Activated naive CD4-positive, alpha-beta T cell treated with anti-CD3 and anti-CD28 coated beads for 36 hours (primary cell): ENCODE measurements at regions of chr14 and their contacts with region 1.

Region 1: DNA sequence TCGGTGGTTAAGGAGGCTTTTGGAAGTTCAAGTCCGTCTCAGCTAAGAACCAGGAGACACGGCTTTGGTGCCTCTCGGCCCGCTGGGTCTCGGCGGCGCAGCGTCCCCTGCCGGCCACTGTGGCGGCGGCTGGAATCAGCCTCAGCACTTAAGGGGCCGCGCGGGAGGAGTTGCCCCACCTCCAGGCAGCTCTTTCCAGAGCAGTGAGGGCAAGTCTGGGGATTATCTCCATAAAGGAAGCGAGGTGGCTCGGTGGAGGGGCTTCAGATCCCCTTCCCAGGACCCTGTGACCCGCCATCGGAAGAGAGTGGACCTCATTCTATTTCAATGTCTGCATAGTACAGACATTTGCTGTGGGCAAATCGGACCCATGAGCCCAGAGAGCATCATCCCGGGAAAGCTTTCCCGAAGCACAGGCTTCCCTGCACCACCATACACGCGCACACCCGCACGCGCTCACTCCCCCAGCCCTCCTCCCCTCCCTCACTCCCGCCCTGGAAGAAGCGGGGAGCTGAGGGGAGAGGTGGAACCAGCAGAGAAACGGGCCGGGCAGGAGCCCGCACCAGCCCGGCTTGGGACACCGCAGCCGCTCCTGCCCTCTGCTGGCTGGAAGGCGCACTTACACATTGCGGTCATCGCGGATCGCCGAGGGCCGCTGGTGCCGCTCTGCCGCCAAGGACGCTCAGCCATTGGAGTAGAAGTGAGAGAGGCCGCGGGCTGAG is 15.9 kb downstream of the RNASE2 start:
- DNase-seq: peak; percentile 82
- H3K4me3 Mint-ChIP-seq: peak overlapping the region; percentile 83
- H3K27ac Mint-ChIP-seq: no peak overlapping the region
- H3K4me1 Mint-ChIP-seq: peaks cover 6% of the 10 kb centered on the region
- H3K27me3 Mint-ChIP-seq: peaks cover 17% of the 10 kb centered on the region

Region 2: GRCh38 chr14:20632682-20633428 is 338.3 kb before region 1 on chr14:
- CTCF ChIA-PET with region 1: interaction called, 3 read pairs
- intact Hi-C with region 1: loop called (anchors 5 kb)
- DNase-seq: peak; percentile 83
- H3K4me3 Mint-ChIP-seq: peak overlapping the region; percentile 79
- H3K27ac Mint-ChIP-seq: peak overlapping the region; percentile 89
- H3K4me1 Mint-ChIP-seq: peaks cover 35% of the 10 kb centered on the region
- H3K27me3 Mint-ChIP-seq: peaks cover 34% of the 10 kb centered on the region

Region 3: DNA sequence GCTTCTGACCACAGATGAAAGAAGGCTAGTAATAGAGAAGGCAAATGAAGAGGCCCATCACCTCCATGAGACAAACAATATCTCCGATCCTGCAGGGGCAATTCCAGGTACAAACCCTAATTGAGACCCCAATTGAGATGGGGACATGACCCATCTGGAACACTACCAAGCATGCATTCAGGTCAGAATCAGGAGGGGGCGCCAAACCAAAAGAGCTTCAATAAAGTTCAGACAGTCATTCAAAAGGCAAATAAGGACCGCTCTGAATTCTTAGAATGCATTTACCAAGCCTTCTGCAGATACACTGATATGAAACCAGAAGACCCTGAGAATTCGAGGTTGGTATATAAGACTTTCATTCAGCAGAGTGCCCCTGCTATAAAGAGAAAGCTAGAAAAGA is 213.2 kb before region 1 on chr14:
- CTCF ChIA-PET with region 1: interaction called, 3 read pairs
- intact Hi-C with region 1: loop called (anchors 5 kb)
- DNase-seq: peak; percentile 62
- H3K4me3 Mint-ChIP-seq: no peak overlapping the region
- H3K27ac Mint-ChIP-seq: no peak overlapping the region
- H3K4me1 Mint-ChIP-seq: no peaks in the 10 kb centered on the region
- H3K27me3 Mint-ChIP-seq: no peaks in the 10 kb centered on the region

Region 4: DNA sequence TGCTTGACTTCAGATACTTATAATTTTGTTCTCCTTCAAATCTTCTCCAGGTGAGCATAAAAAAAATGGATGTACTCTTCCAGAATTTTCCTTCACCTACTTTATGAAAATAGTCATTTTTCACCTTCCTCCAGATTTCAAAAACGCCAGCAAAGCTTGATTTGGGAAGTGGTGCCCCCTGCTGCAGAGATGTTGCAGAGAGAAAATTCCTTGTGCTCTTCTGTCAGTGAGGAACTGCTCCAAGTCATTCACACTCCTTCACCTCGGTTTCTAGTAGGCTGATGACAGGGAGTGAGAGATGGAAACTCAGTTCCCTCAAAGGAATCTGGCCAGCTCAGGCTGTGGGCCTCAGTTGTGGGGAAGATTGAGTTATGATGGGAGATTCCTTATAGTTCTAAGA is 104.2 kb before region 1 on chr14:
- CTCF ChIA-PET with region 1: interaction called, 89 read pairs
- intact Hi-C with region 1: no loop called
- DNase-seq: peak; percentile 9
- H3K4me3 Mint-ChIP-seq: no peak overlapping the region
- H3K27ac Mint-ChIP-seq: no peak overlapping the region
- H3K4me1 Mint-ChIP-seq: no peaks in the 10 kb centered on the region
- H3K27me3 Mint-ChIP-seq: peaks cover 12% of the 10 kb centered on the region

Region 5: DNA sequence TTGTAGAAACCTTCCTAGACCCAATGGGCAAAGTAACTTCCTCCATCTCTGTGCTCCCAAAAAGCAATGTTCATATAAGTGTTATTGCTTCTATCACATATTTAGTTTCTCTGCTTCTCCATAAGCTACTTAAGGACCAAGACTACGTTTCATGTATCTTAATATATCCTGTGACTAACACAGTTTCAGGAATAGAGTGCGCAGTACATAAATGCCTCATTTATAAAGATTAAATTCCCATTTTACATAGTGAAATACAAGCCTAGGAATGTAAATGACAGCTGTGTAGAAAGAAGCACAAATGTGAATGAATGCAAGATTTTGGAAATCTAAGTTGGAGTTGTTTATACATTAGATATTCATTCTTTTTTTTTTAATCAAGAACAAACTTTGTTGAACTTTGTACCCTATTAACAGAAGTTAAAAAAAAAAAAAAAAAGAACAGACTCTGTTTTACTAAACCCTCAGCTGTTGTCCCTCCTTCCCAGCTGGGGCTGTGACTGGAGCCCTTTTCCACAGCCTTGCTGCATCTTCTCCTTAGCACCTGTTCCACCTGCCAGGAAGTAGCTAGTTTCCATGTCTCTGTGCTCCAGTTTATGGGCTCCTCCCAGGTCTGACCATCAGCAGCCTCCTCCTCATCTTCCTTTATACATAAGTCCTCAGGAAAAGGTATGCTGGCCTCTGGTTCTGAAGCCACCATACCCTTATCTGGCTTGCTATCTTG is 11.7 kb after region 1 on chr14:
- CTCF ChIA-PET with region 1: interaction called, 40 read pairs
- intact Hi-C with region 1: no loop called
- DNase-seq: no peak
- H3K4me3 Mint-ChIP-seq: no peak overlapping the region
- H3K27ac Mint-ChIP-seq: no peak overlapping the region
- H3K4me1 Mint-ChIP-seq: no peaks in the 10 kb centered on the region
- H3K27me3 Mint-ChIP-seq: no peaks in the 10 kb centered on the region

Region 6: DNA sequence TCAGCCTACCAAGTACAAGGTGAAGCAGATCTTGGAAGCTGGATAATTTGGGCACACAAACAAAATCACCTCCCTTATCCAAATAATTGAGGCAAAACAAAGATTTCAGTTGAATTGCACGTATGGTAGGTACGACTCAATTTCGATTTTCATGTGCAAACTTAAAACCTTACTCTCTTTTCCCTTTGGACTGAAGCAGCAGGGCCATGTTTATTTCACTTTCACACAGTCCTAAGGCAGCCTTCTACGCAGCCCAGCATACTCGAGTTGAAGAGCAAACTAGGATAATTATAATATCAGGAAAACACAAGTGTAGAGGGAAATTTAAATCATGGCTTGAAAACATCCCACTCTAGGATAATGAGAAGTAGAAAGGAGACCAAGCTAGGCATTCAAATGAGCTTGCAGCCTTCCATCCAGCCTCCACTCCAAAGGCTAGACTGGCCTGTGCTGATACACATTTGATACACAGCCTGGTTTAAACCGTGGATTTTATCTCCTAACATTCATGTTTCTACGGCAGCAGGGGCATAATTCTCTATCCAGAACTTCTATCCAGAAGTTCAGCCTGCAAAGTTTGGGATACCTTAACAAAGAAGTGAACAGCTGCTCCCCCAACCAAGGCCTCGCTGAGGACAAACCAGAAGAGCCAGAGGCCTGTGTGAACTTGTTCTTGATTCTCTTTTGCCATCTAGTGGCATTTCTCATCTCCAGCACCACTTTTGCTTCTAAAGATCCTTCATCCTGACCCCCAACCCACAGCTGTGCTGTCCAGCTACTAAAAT is 68.6 kb after region 1 on chr14:
- CTCF ChIA-PET with region 1: interaction called, 6 read pairs
- intact Hi-C with region 1: loop called (anchors 1 kb)
- DNase-seq: peak; percentile 27
- H3K4me3 Mint-ChIP-seq: no peak overlapping the region
- H3K27ac Mint-ChIP-seq: no peak overlapping the region
- H3K4me1 Mint-ChIP-seq: peaks cover 7% of the 10 kb centered on the region
- H3K27me3 Mint-ChIP-seq: peaks cover 9% of the 10 kb centered on the region

Region 7: GRCh38 chr14:21437063-21437901 is 466.1 kb after region 1 on chr14:
- CTCF ChIA-PET with region 1: no interaction called
- intact Hi-C with region 1: no loop called
- DNase-seq: peak; percentile 100
- H3K4me3 Mint-ChIP-seq: peak overlapping the region; percentile 84
- H3K27ac Mint-ChIP-seq: peak overlapping the region; percentile 90
- H3K4me1 Mint-ChIP-seq: peaks cover 52% of the 10 kb centered on the region
- H3K27me3 Mint-ChIP-seq: no peaks in the 10 kb centered on the region